Sigmoid colon (tissue), 7 donors: ENCODE measurements at regions of chr10 and their contacts with region 1.

Region 1: DNA sequence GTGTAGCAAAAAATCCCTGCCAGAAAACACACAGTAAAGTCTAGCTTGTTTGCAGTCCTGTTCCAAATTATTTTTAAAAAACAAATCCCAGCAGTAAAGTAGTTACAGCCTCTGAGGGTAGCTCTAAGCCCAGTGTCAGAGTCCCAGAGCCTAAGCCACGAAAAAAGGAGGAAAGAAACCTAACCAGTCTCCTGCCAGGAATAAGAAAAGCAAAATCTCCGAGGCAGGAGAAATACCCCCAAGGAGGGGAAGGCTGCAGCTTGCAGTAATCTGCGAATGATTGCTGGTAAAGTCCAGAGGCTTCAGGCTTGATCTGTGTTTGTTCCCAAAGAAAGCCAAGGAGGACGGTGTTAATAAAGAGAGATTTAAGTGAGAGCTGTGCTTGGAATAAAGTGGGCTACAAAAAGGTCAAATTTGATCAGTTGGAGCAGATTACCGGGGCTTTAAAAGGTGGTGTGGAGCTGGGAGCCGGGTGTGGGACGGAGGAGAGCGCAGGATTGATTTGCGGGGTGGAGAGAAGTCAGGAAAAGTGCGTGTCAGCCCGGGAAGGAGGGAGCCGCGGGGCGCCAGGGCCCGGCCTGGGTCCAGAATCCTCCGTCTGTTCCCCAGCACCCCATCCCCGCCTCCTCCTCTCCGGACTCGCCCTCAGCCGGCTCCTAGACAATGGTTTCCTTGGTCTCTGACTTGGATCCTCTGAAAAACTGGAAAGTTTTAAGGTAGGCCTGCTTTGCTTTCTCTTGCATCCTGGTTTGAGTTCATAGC is 219.4 kb upstream of the CELF2 start:
- DNase-seq: peak; percentile 71
- H3K4me3 ChIP-seq: peak overlapping the region; percentile 5 to 43 (median 35)
- H3K27ac ChIP-seq: peak overlapping the region; percentile 83 to 90 (median 85)
- H3K4me1 ChIP-seq: peaks cover 0 to 59% (median 44%) of the 10 kb centered on the region in 4 donors
- H3K27me3 ChIP-seq: no peaks in the 10 kb centered on the region
- CTCF ChIP-seq: no peak
- EP300 ChIP-seq: no peak
- POLR2A ChIP-seq: no peak

Region 2: DNA sequence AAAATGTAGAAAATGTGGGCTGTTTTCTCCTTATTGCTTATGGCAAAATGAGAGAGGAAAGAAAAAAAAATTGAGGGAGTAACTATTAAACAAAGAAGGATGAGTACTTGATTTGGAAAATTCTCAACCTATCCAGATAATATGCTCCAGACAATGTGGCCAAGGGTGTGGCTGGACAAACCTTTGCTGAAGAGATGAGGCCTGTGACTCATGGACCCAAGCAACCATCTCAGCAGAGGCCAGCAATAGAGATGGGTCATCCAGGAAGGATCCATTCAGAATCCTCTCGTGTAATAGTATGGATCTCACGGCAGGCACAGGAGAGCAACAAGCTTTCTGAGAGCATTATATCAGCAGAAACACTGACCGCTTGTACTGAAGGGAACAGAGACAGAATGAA is 99.1 kb after region 1 on chr10:
- intact Hi-C with region 1: no loop called
- DNase-seq: no peak
- H3K4me3 ChIP-seq: no peak overlapping the region
- H3K27ac ChIP-seq: no peak overlapping the region
- H3K4me1 ChIP-seq: no peaks in the 10 kb centered on the region
- H3K27me3 ChIP-seq: no peaks in the 10 kb centered on the region
- CTCF ChIP-seq: no peak
- EP300 ChIP-seq: no peak
- POLR2A ChIP-seq: no peak

Region 3: DNA sequence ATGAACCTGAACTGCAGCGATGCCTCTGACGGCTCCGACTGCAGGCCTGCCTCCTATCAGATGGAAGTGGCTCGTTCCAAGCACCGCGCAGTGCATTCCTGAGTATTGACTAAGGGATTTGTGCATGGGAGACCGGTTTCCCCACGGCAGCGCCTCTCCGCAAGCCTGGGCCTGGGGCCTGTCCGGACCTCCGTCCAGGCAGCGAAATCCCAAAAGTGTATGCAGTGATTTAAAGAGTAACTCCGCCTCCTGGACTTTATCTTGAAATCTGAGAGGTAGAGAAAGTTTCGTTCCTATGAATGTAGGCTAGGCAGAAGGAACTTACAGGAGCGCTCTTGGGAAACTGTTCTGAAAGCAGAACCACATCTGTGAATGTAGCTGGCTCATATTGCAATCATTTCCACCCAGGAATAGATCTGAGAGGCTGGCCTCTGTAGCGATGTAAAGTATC is 113.2 kb after region 1 on chr10:
- intact Hi-C with region 1: loop called (anchors 5 kb)
- DNase-seq: peak; percentile 93
- H3K4me3 ChIP-seq: peak overlapping the region; percentile 25 to 42 (median 36)
- H3K27ac ChIP-seq: peak overlapping the region; percentile 73 to 86 (median 84)
- H3K4me1 ChIP-seq: peaks cover 0 to 46% (median 32%) of the 10 kb centered on the region in 4 donors
- H3K27me3 ChIP-seq: no peaks in the 10 kb centered on the region
- CTCF ChIP-seq: no peak
- EP300 ChIP-seq: no peak
- POLR2A ChIP-seq: no peak